Panc1 (cell line): ENCODE measurements at regions of chr13 and their contacts with region 1.

Region 1: DNA sequence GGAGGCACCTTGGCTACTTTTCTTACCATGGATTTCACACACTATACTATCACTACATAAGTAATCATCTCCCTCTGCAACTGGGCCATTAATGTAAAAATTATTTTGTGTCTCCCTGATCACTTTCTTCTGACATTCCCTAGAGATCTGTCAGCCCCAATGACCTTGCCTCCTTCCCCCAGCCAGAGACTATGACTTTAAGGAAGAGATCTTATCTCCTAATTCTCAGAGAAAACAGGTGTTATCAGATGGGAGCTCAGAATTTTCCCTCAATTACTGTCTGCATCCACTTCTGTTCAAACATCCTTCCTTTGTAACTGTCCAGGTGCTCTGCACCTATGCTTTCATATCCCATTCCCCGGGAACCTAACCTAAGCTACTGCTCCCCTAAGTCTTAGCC is 397.5 kb downstream of the DIAPH3 start:
- DNase-seq: no peak
- ATAC-seq: no peak
- H3K4me3 ChIP-seq: no peak overlapping the region
- H3K27ac ChIP-seq: no peak overlapping the region
- H3K4me1 ChIP-seq: no peaks in the 10 kb centered on the region
- H3K27me3 ChIP-seq: no peaks in the 10 kb centered on the region
- CTCF ChIP-seq: no peak

Region 2: DNA sequence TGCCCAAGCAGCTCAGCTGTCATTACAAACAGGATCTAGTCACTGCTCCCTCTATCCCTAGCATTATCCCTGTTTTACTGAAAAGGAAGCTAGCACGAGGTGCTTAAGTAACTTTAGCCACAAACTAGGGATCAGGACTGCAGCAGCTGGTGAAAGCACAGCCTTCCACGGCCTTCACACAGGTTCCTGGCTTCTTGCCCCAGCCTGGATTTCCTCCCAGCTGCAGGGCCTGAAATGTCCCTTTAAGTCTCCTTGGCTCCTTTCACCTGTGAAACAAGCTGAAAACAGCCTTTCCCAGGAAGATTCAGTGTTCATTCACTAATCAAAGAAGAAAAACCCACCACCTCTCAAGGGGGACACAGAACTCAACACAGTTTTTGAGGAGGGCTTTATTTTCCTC is 357.0 kb before region 1 on chr13:
- CTCF ChIA-PET with region 1: no interaction called
- POLR2A ChIA-PET with region 1: interaction called, 12 read pairs
- in situ Hi-C with region 1: no loop called
- intact Hi-C with region 1: no loop called
- DNase-seq: no peak
- ATAC-seq: no peak
- H3K4me3 ChIP-seq: no peak overlapping the region
- H3K27ac ChIP-seq: no peak overlapping the region
- H3K4me1 ChIP-seq: no peaks in the 10 kb centered on the region
- H3K27me3 ChIP-seq: no peaks in the 10 kb centered on the region
- CTCF ChIP-seq: no peak

Region 3: DNA sequence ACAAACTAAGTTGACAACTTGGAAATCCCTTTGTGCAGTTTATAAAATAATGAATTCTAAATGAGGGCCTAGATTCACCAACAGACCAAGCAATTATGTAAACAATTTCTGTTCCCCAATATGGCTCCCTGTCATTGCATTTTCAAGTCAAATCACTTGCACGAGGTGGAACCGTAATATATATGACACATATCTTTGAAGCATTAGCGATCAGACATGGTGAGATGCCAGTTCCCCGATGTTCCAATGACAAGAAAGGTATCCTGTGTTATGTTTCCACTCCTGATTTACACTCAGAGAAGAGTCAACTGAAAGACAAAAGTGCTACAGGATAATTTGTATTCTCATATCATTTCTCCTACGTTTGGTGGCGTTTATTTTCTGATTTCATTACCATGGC is 522.3 kb after region 1 on chr13:
- CTCF ChIA-PET with region 1: interaction called, 13 read pairs
- POLR2A ChIA-PET with region 1: no interaction called
- in situ Hi-C with region 1: no loop called
- intact Hi-C with region 1: no loop called
- DNase-seq: no peak
- ATAC-seq: no peak
- H3K4me3 ChIP-seq: no peak overlapping the region
- H3K27ac ChIP-seq: no peak overlapping the region
- H3K4me1 ChIP-seq: no peaks in the 10 kb centered on the region
- H3K27me3 ChIP-seq: no peaks in the 10 kb centered on the region
- CTCF ChIP-seq: no peak